Activated CD8-positive, alpha-beta memory T cell treated with anti-CD3 and anti-CD28 coated beads, Interleukin-2, amount 10 ng/mL, durations not matched to agents 7 days and 5 days (primary cell): ENCODE measurements at regions of chr7 and their contacts with region 1.

Region 1: DNA sequence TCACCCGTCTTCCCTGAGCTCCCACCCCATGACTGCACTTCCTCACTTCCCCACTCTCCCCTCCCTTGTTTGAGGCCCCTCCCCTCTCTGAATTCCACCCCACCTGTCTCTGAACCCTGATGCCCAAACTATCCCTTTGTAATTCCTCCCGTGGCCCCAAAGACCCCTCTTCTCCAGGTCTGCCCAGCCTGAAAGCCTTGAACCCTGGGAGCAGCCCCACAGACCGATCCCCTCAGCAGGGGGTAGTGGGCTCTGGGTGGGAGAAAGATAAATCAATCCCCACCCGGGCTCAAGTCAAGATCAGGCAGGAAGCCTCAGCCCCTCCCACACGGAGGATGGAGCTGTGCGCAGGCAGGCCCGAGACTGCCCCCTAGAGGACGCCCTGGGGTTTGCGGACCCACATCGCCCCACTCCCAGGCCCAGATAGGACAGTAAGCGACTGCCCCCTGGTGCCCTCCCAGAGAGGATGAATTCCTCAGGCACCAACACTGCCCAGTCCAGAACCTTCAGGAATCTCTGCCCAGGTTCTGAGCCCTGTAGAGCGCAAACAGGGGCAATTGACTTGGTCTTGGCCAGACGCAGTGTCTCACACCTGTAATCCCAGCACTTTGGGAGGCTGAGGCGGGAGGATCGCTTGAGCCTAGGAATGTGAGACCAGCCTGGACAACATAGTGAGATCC is 11.7 kb downstream of the HSPB1 start:
- DNase-seq: peak; percentile 98
- ATAC-seq: peak; percentile 59
- H3K4me3 Mint-ChIP-seq: no peak overlapping the region
- H3K27ac Mint-ChIP-seq: peak overlapping the region; percentile 77
- H3K4me1 Mint-ChIP-seq: peaks cover 20% of the 10 kb centered on the region
- H3K27me3 Mint-ChIP-seq: no peaks in the 10 kb centered on the region

Region 2: GRCh38 chr7:76122516-76123239 is 191.5 kb before region 1 on chr7:
- CTCF ChIA-PET with region 1: no interaction called
- DNase-seq: no peak
- ATAC-seq: no peak
- H3K4me3 Mint-ChIP-seq: no peak overlapping the region
- H3K27ac Mint-ChIP-seq: no peak overlapping the region
- H3K4me1 Mint-ChIP-seq: peaks cover 3% of the 10 kb centered on the region
- H3K27me3 Mint-ChIP-seq: no peaks in the 10 kb centered on the region

Region 3: DNA sequence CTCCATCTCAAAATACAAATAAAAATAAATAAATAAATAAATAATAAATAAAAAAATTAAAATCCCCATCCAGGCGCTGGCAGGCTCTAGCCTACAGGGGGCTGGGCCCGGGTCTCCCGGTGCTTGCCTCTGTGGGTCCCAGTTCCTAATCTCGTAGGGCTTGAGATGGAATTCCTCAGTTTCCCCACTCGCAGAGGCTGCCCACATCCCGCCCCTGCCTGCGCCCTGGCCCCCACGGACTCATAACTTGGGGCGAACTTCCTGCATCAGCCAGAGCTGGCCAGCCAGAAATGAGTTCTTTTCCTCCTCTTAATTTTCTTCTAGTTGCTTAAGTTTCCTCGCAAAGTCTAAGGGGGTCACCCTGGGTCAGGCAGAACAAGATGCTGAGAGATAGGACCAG is 134.5 kb before region 1 on chr7:
- CTCF ChIA-PET with region 1: interaction called, 143 read pairs
- DNase-seq: no peak
- ATAC-seq: no peak
- H3K4me3 Mint-ChIP-seq: no peak overlapping the region
- H3K27ac Mint-ChIP-seq: no peak overlapping the region
- H3K4me1 Mint-ChIP-seq: peaks cover 6% of the 10 kb centered on the region
- H3K27me3 Mint-ChIP-seq: no peaks in the 10 kb centered on the region

Region 4: GRCh38 chr7:76269895-76270294 is 44.3 kb before region 1 on chr7:
- CTCF ChIA-PET with region 1: interaction called, 26 read pairs
- DNase-seq: no peak
- ATAC-seq: no peak
- H3K4me3 Mint-ChIP-seq: no peak overlapping the region
- H3K27ac Mint-ChIP-seq: no peak overlapping the region
- H3K4me1 Mint-ChIP-seq: peaks cover 29% of the 10 kb centered on the region
- H3K27me3 Mint-ChIP-seq: peaks cover 34% of the 10 kb centered on the region

Region 5: GRCh38 chr7:76302347-76303201 is 11.6 kb before region 1 on chr7 and contains the start of gene HSPB1:
- CTCF ChIA-PET with region 1: interaction called, 344 read pairs
- DNase-seq: peak; percentile 66
- ATAC-seq: peak; percentile 35
- H3K4me3 Mint-ChIP-seq: peak within 1 kb of the TSS; percentile 83
- H3K27ac Mint-ChIP-seq: peak within 1 kb of the TSS; percentile 81
- H3K4me1 Mint-ChIP-seq: peaks cover 15% of the 10 kb centered on the region
- H3K27me3 Mint-ChIP-seq: peaks cover 15% of the 10 kb centered on the region
- total RNA-seq, gene HSPB1: 36.5 to 62.9 TPM

Region 6: GRCh38 chr7:76343294-76343930 is 29.2 kb after region 1 on chr7:
- CTCF ChIA-PET with region 1: no interaction called
- DNase-seq: no peak
- ATAC-seq: peak; percentile 48
- H3K4me3 Mint-ChIP-seq: no peak overlapping the region
- H3K27ac Mint-ChIP-seq: peak overlapping the region; percentile 68
- H3K4me1 Mint-ChIP-seq: peaks cover 59% of the 10 kb centered on the region
- H3K27me3 Mint-ChIP-seq: no peaks in the 10 kb centered on the region